ENCODE measurements at regions of chrX and their contacts with region 1.

Region 1: GRCh38 chrX:19887911-19888879 is 795 bp upstream of the SH3KBP1 start:
- DNase-seq: peak; percentile 18 to 32 (median 24)
- ATAC-seq: peak; percentile 53
- H3K4me3 ChIP-seq: peak overlapping the region; percentile 35
- H3K27ac ChIP-seq: no peak overlapping the region
- H3K4me1 ChIP-seq: peaks cover 3 to 18% of the 10 kb centered on the region in 2 experiments; a peak in 4 of 5 replicates
- H3K27me3 ChIP-seq: peaks cover 4 to 10% of the 10 kb centered on the region in 2 experiments; a peak in 4 of 5 replicates
- CTCF ChIP-seq: peak; percentile 18 to 43 (median 19); a peak in 2 of 6 replicates
- EP300 ChIP-seq: no peak
- POLR2A ChIP-seq: no peak
- RAD21 ChIP-seq: peak; percentile 47 to 59

Region 2: GRCh38 chrX:19372170-19372546 is 516.0 kb before region 1 on chrX:
- CTCF ChIA-PET with region 1: interaction called, 5 read pairs
- POLR2A ChIA-PET with region 1: no interaction called
- in situ Hi-C with region 1: no loop called
- intact Hi-C with region 1: loop called (anchors 10 kb)
- DNase-seq: peak; percentile 63 to 69 (median 67)
- ATAC-seq: peak; percentile 95
- H3K4me3 ChIP-seq: no peak overlapping the region
- H3K27ac ChIP-seq: no peak overlapping the region
- H3K4me1 ChIP-seq: no peaks in the 10 kb centered on the region
- H3K27me3 ChIP-seq: peaks cover 3 to 41% of the 10 kb centered on the region in 2 experiments; a peak in 4 of 5 replicates
- CTCF ChIP-seq: peak; percentile 77 to 81 (median 79)
- EP300 ChIP-seq: no peak
- POLR2A ChIP-seq: no peak
- RAD21 ChIP-seq: peak; percentile 77 to 85

Region 3: GRCh38 chrX:19544693-19545305 is 343.4 kb before region 1 on chrX:
- CTCF ChIA-PET with region 1: no interaction called
- POLR2A ChIA-PET with region 1: no interaction called
- in situ Hi-C with region 1: no loop called
- intact Hi-C with region 1: loop called (anchors 5 kb)
- DNase-seq: peak; percentile 41 to 63 (median 48)
- ATAC-seq: peak; percentile 87
- H3K4me3 ChIP-seq: no peak overlapping the region
- H3K27ac ChIP-seq: no peak overlapping the region
- H3K4me1 ChIP-seq: no peaks in the 10 kb centered on the region
- H3K27me3 ChIP-seq: peaks cover 0 to 32% of the 10 kb centered on the region in 2 experiments; a peak in 2 of 5 replicates
- CTCF ChIP-seq: peak; percentile 47 to 77 (median 66); a peak in 5 of 6 replicates
- EP300 ChIP-seq: no peak
- POLR2A ChIP-seq: no peak
- RAD21 ChIP-seq: peak; percentile 61 to 78

Region 4: DNA sequence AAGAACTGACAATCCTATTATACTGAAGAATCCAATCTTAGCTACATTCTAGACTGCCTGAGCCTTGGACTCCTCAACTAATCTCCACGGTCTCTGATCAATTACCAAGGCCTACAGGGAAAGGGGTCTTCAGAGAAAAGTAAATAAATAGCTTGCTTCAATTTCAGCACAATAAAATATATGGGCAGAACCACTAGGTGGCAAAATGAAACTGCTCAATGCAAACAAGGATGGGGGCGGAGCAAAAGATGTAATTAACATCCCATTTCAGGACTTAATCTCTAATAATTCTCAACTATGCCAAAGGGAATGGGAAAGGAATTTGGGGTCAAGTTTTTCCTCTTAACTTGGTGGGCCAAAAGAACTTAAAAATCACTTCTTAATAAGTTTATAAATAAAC is 294.5 kb before region 1 on chrX:
- CTCF ChIA-PET with region 1: no interaction called
- POLR2A ChIA-PET with region 1: no interaction called
- in situ Hi-C with region 1: no loop called
- intact Hi-C with region 1: loop called (anchors 5 kb)
- DNase-seq: peak in 3 of 4 experiments; percentile 7 to 20 (median 13)
- ATAC-seq: no peak
- H3K4me3 ChIP-seq: no peak overlapping the region
- H3K27ac ChIP-seq: no peak overlapping the region
- H3K4me1 ChIP-seq: no peaks in the 10 kb centered on the region; a peak in 1 of 5 replicates
- H3K27me3 ChIP-seq: peaks cover 0 to 5% of the 10 kb centered on the region in 2 experiments; a peak in 2 of 5 replicates
- CTCF ChIP-seq: peak; percentile 17 to 59 (median 35); a peak in 4 of 6 replicates
- EP300 ChIP-seq: no peak
- POLR2A ChIP-seq: no peak
- RAD21 ChIP-seq: peak; percentile 55 to 75

Region 5: DNA sequence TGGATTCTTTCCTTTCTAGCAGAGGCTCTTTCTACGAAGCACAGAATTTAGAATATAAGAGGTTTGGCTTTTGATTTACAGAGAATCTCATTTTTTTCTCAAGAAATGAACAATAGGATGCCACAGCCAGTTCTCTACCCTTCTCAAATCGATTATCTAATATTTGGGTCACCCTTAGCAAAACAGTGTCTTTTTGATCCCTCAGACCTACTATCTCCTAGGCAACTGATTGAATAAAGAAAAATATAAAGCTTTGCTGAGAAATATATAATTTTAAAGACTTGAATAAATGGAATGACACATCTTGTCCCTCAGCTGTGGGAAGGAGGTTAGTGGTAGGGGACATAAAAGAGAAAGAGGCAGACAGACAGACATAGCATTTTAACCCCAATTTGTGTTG is 154.1 kb before region 1 on chrX:
- CTCF ChIA-PET with region 1: interaction called, 10 read pairs
- POLR2A ChIA-PET with region 1: no interaction called
- in situ Hi-C with region 1: no loop called
- intact Hi-C with region 1: loop called (anchors 1 kb)
- DNase-seq: no peak
- ATAC-seq: no peak
- H3K4me3 ChIP-seq: no peak overlapping the region
- H3K27ac ChIP-seq: no peak overlapping the region
- H3K4me1 ChIP-seq: no peaks in the 10 kb centered on the region
- H3K27me3 ChIP-seq: peaks cover 0 to 5% of the 10 kb centered on the region in 2 experiments; a peak in 2 of 5 replicates
- CTCF ChIP-seq: no peak
- EP300 ChIP-seq: no peak
- POLR2A ChIP-seq: no peak
- RAD21 ChIP-seq: no peak

Region 6: DNA sequence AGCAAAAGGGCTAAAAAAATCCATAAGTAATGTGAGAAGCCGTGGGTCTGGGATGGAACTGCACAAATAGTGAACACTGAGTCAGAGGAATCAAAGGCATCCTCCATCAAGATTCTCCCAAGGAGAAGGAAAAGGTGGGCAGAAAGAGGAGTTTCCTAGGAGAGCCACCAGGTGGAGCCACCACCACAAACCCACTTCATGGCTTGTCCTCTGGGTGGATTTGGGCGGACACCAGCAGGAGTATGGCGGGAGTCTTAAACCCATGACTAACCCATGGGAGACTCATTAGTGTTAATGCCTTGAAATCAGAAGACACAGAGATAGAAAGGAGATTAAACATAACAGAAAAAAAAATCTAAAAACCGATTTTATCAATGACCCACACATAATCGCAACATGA is 148.5 kb before region 1 on chrX:
- CTCF ChIA-PET with region 1: interaction called, 10 read pairs
- POLR2A ChIA-PET with region 1: no interaction called
- in situ Hi-C with region 1: no loop called
- intact Hi-C with region 1: loop called (anchors 1 kb)
- DNase-seq: peak; percentile 58 to 65 (median 60)
- ATAC-seq: peak; percentile 93
- H3K4me3 ChIP-seq: no peak overlapping the region
- H3K27ac ChIP-seq: no peak overlapping the region
- H3K4me1 ChIP-seq: no peaks in the 10 kb centered on the region
- H3K27me3 ChIP-seq: peaks cover 0 to 5% of the 10 kb centered on the region in 2 experiments; a peak in 2 of 5 replicates
- CTCF ChIP-seq: peak; percentile 68 to 86 (median 72)
- EP300 ChIP-seq: no peak
- POLR2A ChIP-seq: no peak
- RAD21 ChIP-seq: peak; percentile 64 to 75